ENCODE measurements at regions of chr10 and their contacts with region 1.

Region 1: DNA sequence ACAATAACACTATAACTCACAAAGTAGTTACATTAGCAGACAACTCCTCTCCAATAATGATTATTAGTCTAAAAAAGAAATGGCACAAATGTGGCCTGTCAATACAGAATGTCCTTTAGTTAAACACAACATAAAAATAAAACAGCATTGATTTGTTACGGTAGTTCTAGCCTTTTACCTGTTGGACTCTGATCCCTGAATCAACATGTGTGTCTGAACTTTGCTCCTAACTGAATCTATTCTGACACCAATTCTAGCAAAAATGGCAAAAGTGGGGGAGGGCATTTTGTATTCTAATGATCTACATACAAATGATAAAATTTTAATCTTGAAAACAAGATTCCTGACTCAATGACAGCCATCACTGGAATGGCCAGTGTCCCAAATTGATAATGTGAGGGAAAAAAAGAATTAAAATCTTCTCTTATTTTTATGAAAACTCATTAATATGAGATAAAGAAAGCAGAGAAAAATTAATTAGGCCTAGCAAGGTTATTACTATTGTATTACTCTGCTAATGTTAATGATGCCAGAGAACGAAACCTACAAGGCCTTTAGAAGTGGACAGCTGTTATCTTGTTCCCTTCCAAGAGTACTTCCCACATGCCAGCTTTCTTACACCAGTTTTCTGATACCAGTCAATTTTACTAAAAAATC is 30.2 kb downstream of the FRA10AC1 start:
- DNase-seq: no peak
- H3K4me3 ChIP-seq: no peak overlapping the region
- H3K4me1 ChIP-seq: peaks cover 7% of the 10 kb centered on the region
- H3K27me3 ChIP-seq: no peaks in the 10 kb centered on the region

Region 2: DNA sequence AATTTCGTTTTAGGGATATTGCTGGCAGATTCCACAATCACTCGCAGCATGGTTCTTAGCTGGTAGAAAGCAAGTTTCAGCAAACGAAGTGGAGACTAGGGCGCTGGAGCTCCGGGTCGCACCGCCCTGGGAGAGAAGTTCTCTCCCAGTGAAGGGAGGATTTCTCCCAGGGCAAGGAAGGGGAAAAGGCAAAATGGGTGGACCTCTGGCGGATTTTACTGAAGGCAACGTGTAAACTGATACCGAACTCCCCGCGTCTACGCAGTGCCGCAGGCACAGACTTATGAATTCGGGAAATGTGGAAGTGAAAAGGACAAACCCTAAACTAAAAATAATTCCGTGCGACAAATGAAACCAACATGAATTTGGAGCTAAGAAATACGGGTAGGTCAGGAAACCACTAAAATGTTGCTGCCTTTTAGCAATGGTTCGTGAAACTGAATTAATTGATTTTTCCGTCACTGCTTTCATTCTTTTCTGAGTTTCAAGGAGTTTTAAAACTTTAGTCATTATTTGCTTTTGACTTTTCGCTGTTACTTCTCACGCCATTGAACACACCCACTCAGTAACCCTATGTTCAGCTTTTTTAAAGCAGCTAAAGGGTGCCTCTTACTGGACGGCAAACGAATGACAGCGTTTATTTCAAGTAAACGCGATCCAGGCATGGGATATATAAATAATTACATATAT is 189.9 kb before region 1 on chr10 and contains the start of gene MYOF:
- in situ Hi-C with region 1: no loop called
- DNase-seq: peak; percentile 70 to 72
- H3K4me3 ChIP-seq: peak within 1 kb of the TSS; percentile 38
- H3K4me1 ChIP-seq: peaks cover 18% of the 10 kb centered on the region
- H3K27me3 ChIP-seq: no peaks in the 10 kb centered on the region

Region 3: GRCh38 chr10:93566435-93567276 is 105.5 kb before region 1 on chr10 and contains the start of gene FFAR4:
- in situ Hi-C with region 1: loop called (anchors 10 kb)
- DNase-seq: no peak
- H3K4me3 ChIP-seq: no peak within 1 kb of the TSS
- H3K4me1 ChIP-seq: no peaks in the 10 kb centered on the region
- H3K27me3 ChIP-seq: peaks cover 19% of the 10 kb centered on the region